GM12878 (cell line): ENCODE measurements at regions of chr22 and their contacts with region 1.

Region 1: GRCh38 chr22:47022075-47022473 is 259.6 kb downstream of the TBC1D22A start:
- DNase-seq: no peak
- ATAC-seq: no peak
- H3K4me3 ChIP-seq: no peak overlapping the region
- H3K27ac ChIP-seq: no peak overlapping the region
- H3K4me1 ChIP-seq: no peaks in the 10 kb centered on the region
- H3K27me3 ChIP-seq: no peaks in the 10 kb centered on the region
- CTCF ChIP-seq: no peak
- EP300 ChIP-seq: no peak
- POLR2A ChIP-seq: no peak
- RAD21 ChIP-seq: no peak

Region 2: GRCh38 chr22:47011131-47011858 is 10.8 kb before region 1 on chr22:
- CTCF ChIA-PET with region 1: no interaction called
- POLR2A ChIA-PET with region 1: no interaction called
- RAD21 ChIA-PET with region 1: no interaction called
- SMC1A ChIA-PET with region 1: no interaction called
- in situ Hi-C with region 1: no loop called
- intact Hi-C with region 1: no loop called
- DNase-seq: no peak
- ATAC-seq: no peak
- H3K4me3 ChIP-seq: no peak overlapping the region
- H3K27ac ChIP-seq: no peak overlapping the region
- H3K4me1 ChIP-seq: no peaks in the 10 kb centered on the region
- H3K27me3 ChIP-seq: no peaks in the 10 kb centered on the region
- CTCF ChIP-seq: no peak
- EP300 ChIP-seq: no peak
- POLR2A ChIP-seq: no peak
- RAD21 ChIP-seq: no peak

Region 3: DNA sequence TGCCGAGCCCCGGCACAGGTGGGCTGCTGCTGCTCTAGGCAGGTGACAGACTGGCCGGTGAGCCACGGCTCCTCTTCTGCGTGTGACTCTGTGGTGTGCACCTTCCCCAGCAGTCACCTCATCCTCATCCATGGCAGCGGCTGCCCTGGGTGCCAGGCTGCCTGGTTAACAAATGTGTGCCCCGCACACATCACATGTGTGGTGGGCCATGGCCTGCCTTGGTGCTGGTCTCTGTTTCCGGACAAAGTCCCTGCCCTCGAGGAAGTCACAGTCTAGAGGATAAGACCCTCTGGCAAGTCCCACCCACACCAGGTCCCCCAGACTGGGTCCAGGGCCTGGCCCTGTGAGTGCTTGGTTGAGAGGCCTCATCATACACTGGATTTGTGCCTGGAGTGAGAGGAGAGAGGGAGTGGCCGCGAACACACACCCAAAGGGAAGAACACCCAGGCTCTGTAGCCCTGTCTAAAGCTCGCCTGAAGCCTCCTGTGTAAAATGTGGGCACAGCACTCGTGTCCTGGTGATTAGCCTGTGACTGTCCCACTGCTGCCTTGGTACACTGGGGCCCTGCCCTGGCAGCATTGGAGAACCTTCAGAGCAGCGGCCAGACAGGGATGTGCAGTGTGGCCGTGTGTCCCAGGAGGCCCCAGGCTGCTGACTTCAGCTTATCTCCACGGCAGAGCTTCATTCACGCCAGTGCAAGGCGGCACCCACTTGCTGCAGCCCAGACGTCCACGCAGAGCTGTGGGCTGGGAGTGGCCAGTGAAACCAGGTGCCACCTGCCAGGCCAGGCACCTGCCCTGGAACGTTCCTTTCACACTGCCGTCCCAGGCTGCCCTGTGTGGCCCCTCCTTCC is 10.2 kb after region 1 on chr22:
- CTCF ChIA-PET with region 1: no interaction called
- POLR2A ChIA-PET with region 1: no interaction called
- RAD21 ChIA-PET with region 1: no interaction called
- SMC1A ChIA-PET with region 1: no interaction called
- in situ Hi-C with region 1: no loop called
- intact Hi-C with region 1: no loop called
- DNase-seq: no peak
- ATAC-seq: no peak
- H3K4me3 ChIP-seq: no peak overlapping the region
- H3K27ac ChIP-seq: no peak overlapping the region
- H3K4me1 ChIP-seq: no peaks in the 10 kb centered on the region
- H3K27me3 ChIP-seq: no peaks in the 10 kb centered on the region
- CTCF ChIP-seq: no peak
- EP300 ChIP-seq: no peak
- POLR2A ChIP-seq: no peak
- RAD21 ChIP-seq: no peak

Region 4: DNA sequence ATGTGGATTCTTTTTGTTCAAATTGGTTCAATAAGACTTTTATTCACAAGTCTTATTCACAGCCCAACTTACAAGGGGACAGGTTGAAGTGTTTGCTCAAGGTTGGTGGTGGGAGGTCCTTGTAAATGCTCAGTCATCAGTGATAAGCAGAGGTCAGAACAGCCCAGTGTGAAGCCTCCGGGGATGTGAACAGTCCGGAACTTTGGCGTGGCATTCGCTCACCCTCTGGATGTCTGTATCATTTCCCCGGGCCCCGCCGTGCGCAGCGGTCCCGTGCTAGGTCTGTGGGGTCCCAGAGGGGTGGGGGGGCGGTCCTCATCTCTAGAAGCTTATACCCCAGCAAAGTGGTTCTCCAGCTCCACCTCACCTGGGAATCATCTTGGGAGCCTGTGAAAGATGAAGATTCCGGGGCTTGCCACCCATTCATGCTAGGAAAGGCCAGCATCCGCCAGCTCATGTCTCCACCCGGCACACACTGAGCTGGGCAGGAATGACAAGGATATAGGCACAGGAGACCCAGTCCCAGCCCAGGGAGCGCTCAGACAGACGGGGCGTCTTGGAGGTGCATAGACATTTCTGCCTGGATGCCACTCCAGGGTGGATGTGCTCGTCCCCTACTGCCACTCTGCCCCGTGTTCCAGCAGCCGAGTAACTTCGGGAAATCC is 67.9 kb after region 1 on chr22:
- CTCF ChIA-PET with region 1: no interaction called
- POLR2A ChIA-PET with region 1: no interaction called
- RAD21 ChIA-PET with region 1: no interaction called
- SMC1A ChIA-PET with region 1: no interaction called
- in situ Hi-C with region 1: loop called (anchors 10 kb)
- intact Hi-C with region 1: no loop called
- DNase-seq: no peak
- ATAC-seq: no peak
- H3K4me3 ChIP-seq: no peak overlapping the region
- H3K27ac ChIP-seq: no peak overlapping the region
- H3K4me1 ChIP-seq: no peaks in the 10 kb centered on the region
- H3K27me3 ChIP-seq: no peaks in the 10 kb centered on the region
- CTCF ChIP-seq: no peak
- EP300 ChIP-seq: no peak
- POLR2A ChIP-seq: no peak
- RAD21 ChIP-seq: no peak